Activated CD4-positive, alpha-beta T cell treated with anti-CD3 and anti-CD28 coated beads for 36 hours (primary cell): ENCODE measurements at regions of chr2 and their contacts with region 1.

Region 1: DNA sequence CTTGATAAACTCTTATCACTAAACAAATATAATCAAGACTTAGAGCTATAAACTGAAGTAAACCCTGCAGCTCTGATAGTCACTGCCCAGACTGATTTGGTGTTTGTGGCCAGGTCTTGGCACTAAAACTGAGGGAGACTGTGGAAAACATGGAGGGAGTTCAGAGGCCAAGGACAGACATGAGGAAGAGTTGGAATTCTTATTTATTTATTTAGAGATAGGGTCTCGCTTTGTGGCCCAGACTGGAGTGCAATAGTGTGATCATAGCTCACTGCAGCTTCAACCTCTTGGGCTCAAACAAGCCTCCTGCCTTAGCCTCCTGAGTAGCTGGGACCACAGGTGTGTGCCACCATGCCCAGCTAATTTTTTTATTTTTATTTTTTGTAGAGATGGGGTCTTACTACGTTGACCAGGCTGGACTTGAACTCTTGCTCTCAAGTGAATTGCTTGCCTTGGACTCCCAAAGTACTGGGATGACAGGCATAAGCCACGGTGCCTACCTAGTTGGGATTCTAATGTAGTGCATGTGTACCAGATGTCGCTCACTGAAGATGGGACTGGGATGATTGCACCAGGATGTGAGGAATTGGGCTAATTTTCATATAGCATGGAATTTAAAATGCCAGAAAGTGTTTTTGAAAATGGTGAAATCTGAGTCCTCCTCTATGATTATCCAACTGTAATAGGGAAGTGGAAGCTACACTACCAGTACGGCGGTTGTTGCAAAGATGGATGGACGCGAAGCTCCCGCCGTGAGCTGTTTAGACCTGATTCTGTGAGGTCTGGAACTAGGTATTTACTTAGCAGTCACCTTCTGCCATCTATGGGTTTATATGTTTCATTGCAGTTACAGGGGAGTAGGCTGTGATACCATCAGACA is 52.7 kb upstream of the CTLA4 start:
- DNase-seq: peak; percentile 76
- ATAC-seq: peak; percentile 70
- H3K4me3 Mint-ChIP-seq: peak overlapping the region; percentile 54
- H3K27ac Mint-ChIP-seq: peak overlapping the region; percentile 80
- H3K4me1 Mint-ChIP-seq: peaks cover 63% of the 10 kb centered on the region
- H3K27me3 Mint-ChIP-seq: no peaks in the 10 kb centered on the region

Region 2: GRCh38 chr2:202588647-202589581 is 1226.0 kb before region 1 on chr2:
- CTCF ChIA-PET with region 1: no interaction called
- POLR2A ChIA-PET with region 1: no interaction called
- intact Hi-C with region 1: loop called in 1 of 2 experiments (anchors 5 kb)
- DNase-seq: peak; percentile 80
- ATAC-seq: peak; percentile 97
- H3K4me3 Mint-ChIP-seq: no peak overlapping the region
- H3K27ac Mint-ChIP-seq: peak overlapping the region; percentile 56
- H3K4me1 Mint-ChIP-seq: peaks cover 11% of the 10 kb centered on the region
- H3K27me3 Mint-ChIP-seq: no peaks in the 10 kb centered on the region

Region 3: DNA sequence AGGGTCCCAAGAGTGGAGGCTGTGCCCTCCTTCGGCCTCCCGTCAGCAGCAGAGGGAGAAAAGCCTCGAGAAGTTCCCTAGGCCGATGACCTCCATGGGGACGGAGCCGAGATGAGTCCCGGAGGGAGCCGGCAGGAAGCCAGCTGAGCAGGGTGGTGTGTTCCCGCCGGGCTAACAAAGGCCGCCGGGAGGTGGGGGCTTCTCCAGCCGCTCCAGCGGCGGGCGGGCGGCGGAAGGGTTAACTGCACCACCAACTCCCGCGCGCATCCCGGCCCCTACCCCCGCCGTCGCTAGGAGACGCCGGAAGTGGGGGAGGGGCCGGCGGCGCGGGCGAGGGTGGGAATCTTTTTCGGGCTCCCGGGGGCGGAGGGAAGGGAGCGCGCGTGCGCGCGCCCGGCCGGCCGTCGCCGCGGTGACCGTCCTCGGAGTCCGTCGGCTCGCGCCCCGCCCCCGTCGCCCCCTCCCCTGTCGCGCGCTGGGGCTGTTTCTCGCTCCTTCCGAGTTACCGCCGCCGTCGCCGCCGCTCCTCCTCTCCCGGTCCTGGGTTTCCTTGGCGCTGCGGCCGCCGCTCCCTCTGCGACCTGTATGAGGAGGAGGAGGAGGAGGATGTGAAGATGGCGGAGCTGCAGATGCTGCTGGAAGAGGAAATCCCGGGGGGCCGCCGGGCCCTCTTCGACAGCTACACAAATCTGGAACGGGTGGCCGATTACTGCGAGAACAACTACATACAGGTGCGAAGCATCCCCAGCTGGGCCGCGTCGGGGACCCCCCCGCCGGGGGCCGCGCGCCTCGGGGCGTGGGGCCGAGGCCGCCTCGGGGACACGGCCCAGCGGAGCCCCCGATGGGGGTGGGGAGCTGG is 486.8 kb before region 1 on chr2 and contains the start of gene ABI2:
- CTCF ChIA-PET with region 1: no interaction called
- POLR2A ChIA-PET with region 1: no interaction called
- intact Hi-C with region 1: loop called (anchors 2 to 5 kb)
- DNase-seq: peak; percentile 77
- ATAC-seq: peak; percentile 52
- H3K4me3 Mint-ChIP-seq: peak within 1 kb of the TSS; percentile 91
- H3K27ac Mint-ChIP-seq: peak within 1 kb of the TSS; percentile 84
- H3K4me1 Mint-ChIP-seq: peaks cover 31% of the 10 kb centered on the region
- H3K27me3 Mint-ChIP-seq: no peaks in the 10 kb centered on the region
- total RNA-seq, gene ABI2: 40.6 to 57.6 TPM

Region 4: GRCh38 chr2:203578759-203579643 is 235.9 kb before region 1 on chr2:
- CTCF ChIA-PET with region 1: interaction called, 8 read pairs
- POLR2A ChIA-PET with region 1: no interaction called
- intact Hi-C with region 1: loop called in 1 of 2 experiments (anchors 5 kb)
- DNase-seq: peak; percentile 67
- ATAC-seq: peak; percentile 95
- H3K4me3 Mint-ChIP-seq: no peak overlapping the region
- H3K27ac Mint-ChIP-seq: peak overlapping the region; percentile 78
- H3K4me1 Mint-ChIP-seq: peaks cover 21% of the 10 kb centered on the region
- H3K27me3 Mint-ChIP-seq: no peaks in the 10 kb centered on the region

Region 5: GRCh38 chr2:203730076-203730729 is 84.7 kb before region 1 on chr2:
- CTCF ChIA-PET with region 1: interaction called, 18 read pairs
- POLR2A ChIA-PET with region 1: interaction called, 10 read pairs
- intact Hi-C with region 1: loop called (anchors 1 to 2 kb)
- DNase-seq: no peak
- ATAC-seq: peak; percentile 50
- H3K4me3 Mint-ChIP-seq: peak overlapping the region; percentile 46
- H3K27ac Mint-ChIP-seq: peak overlapping the region; percentile 99
- H3K4me1 Mint-ChIP-seq: peaks cover 93% of the 10 kb centered on the region
- H3K27me3 Mint-ChIP-seq: no peaks in the 10 kb centered on the region

Region 6: GRCh38 chr2:203782262-203782976 is 32.5 kb before region 1 on chr2:
- CTCF ChIA-PET with region 1: interaction called, 40 read pairs
- POLR2A ChIA-PET with region 1: no interaction called
- intact Hi-C with region 1: loop called (anchors 1 to 2 kb)
- DNase-seq: peak; percentile 81
- ATAC-seq: peak; percentile 94
- H3K4me3 Mint-ChIP-seq: no peak overlapping the region
- H3K27ac Mint-ChIP-seq: peak overlapping the region; percentile 89
- H3K4me1 Mint-ChIP-seq: peaks cover 52% of the 10 kb centered on the region
- H3K27me3 Mint-ChIP-seq: no peaks in the 10 kb centered on the region

Region 7: DNA sequence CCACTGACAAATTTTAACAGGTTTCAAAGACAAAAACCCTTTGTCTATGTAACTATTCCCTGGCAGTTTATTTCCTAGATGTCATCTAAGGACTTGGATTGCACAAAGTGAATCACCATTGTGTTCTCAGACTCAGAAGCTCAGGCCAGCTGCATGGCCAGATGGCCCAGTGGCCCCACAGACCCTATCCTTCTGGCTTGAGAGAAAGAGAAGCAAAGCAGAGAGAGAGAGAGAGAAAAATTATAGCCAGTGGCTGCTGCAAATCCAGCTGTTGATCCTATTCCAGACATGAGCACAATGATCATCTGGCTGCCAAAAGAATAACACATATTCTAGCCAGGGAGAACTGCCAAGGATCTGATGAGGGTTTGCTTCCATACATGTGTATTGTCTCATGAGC is 78.5 kb after region 1 on chr2:
- CTCF ChIA-PET with region 1: interaction called, 7 read pairs
- POLR2A ChIA-PET with region 1: interaction called, 10 read pairs
- intact Hi-C with region 1: loop called in 1 of 2 experiments (anchors 5 kb)
- DNase-seq: no peak
- ATAC-seq: no peak
- H3K4me3 Mint-ChIP-seq: peak overlapping the region; percentile 23
- H3K27ac Mint-ChIP-seq: peak overlapping the region; percentile 85
- H3K4me1 Mint-ChIP-seq: peaks cover 78% of the 10 kb centered on the region
- H3K27me3 Mint-ChIP-seq: peaks cover 2% of the 10 kb centered on the region